Common myeloid progenitor, CD34-positive (primary cell): ENCODE measurements at regions of chr13 and their contacts with region 1.

Region 1: DNA sequence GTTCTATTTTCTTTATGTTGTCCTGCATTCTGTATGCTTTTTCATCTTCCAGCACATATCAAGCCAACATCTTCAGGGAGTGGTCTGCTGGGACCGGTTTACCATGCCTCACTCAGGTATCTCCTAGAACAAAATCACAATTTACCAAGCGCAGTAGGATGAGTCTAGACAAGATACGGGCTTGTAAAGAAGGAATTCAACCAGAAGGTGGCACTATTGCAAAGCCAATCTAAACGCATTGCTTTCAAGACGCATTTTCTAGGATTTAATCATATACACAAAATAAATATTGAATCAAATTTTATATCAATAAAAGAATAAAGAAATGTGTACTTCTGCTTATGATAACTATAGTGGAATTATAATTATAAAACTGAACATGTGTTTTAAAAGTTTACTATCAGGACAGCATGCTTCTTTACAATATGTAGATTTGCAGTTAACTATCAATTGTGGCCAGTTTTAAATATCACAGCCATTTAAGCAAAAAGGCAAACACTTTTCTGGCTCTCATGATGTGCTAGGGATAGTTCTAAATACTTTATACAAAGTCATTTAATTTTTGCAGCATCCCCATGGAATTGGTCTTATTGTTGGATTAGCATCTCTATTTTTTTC is 16.1 kb upstream of the TPP2 start:
- DNase-seq: peak; percentile 76 to 85 (median 76)
- H3K4me3 ChIP-seq: no peak overlapping the region
- H3K27ac ChIP-seq: no peak overlapping the region
- H3K4me1 ChIP-seq: peaks cover 0 to 10% (median 7%) of the 10 kb centered on the region in 4 experiments
- H3K27me3 ChIP-seq: no peaks in the 10 kb centered on the region

Region 2: GRCh38 chr13:102609696-102610095 is 29.0 kb after region 1 on chr13:
- CTCF ChIA-PET with region 1: interaction called, 11 read pairs
- POLR2A ChIA-PET with region 1: no interaction called
- DNase-seq: no peak
- H3K4me3 ChIP-seq: no peak overlapping the region
- H3K27ac ChIP-seq: no peak overlapping the region
- H3K4me1 ChIP-seq: peaks cover 0 to 15% (median 4%) of the 10 kb centered on the region in 4 experiments
- H3K27me3 ChIP-seq: no peaks in the 10 kb centered on the region

Region 3: GRCh38 chr13:102724923-102725322 is 144.3 kb after region 1 on chr13:
- CTCF ChIA-PET with region 1: interaction called, 23 read pairs
- POLR2A ChIA-PET with region 1: no interaction called
- DNase-seq: peak; percentile 33 to 70 (median 68)
- H3K4me3 ChIP-seq: no peak overlapping the region
- H3K27ac ChIP-seq: no peak overlapping the region
- H3K4me1 ChIP-seq: peaks cover 0 to 7% (median 1%) of the 10 kb centered on the region in 4 experiments
- H3K27me3 ChIP-seq: no peaks in the 10 kb centered on the region